ENCODE measurements at regions of chr5 and their contacts with region 1.

Region 1: DNA sequence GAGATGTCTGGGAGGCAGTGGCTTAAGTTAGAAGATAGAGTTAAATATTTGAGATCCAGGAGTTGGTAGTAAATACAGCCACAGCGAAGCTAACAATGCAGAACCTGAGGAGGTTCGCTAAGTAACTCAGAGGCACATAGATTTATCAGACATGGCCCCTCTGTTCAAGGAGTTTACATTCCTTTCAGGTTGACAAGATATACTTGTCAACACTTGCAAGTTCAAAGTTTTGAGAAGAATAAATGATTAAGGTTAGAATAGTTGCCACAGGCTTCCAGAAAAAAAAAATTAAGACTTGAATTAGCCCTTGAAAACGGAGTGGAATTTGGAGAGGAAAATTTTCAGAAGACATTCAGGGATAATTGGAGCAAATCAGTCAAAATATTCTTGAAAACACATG is 658.3 kb upstream of the WWC1 start:
- DNase-seq: no peak
- H3K4me3 ChIP-seq: no peak overlapping the region
- H3K27ac ChIP-seq: no peak overlapping the region
- H3K27me3 ChIP-seq: no peaks in the 10 kb centered on the region
- CTCF ChIP-seq: no peak

Region 2: DNA sequence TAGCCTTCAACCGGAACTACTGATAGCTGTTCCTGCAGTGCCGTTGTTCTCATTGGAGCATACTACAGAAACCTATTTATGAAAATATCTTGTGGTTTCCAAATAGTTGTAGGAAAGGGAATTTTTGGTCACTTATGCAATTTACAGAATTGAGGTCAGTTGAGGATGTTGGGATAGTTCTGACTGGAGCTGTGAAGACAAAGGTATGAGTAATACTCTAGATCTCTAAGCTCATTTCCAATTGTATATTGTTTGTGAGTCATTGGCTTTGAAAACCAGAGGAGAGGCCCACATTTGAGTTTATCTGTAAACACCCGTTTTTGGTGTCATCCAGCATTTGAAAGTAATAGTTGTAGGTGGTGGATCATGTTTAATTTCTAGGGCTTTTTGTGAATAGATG is 97.0 kb after region 1 on chr5:
- CTCF ChIA-PET with region 1: no interaction called
- POLR2A ChIA-PET with region 1: no interaction called
- DNase-seq: peak; percentile 80
- H3K4me3 ChIP-seq: no peak overlapping the region
- H3K27ac ChIP-seq: no peak overlapping the region
- H3K27me3 ChIP-seq: no peaks in the 10 kb centered on the region
- CTCF ChIP-seq: no peak

Region 3: DNA sequence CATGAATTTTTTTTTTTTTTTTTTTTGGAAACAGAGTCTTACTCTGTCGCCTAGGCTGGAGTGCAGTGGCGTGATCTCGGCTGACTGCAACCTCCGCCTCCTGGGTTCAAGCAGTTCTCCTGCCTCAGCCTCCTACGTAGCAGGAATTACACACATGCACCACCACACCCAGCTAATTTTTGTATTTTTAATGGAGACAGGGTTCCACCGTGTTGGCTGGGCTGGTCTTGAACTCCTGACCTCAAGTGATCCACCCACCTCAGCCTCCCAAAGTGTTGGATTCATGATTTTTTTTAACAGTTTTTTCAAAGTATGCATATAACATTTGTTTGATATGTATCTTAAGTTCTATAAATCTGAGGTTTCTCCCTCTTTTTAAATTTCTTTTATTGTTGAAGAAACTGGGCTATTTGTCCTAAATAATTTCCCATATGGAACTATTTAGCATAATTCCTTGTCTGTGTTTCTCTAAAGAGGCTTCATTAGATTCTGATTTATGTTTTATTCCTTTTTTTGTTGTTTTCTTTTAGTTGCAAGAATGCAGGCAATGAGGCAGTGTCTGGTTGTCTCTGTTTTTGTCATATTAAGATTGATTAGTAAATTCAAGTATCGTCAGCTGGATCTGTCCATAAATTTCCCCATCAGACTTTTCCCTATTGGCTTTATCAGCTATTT is 869.6 kb after region 1 on chr5:
- CTCF ChIA-PET with region 1: interaction called, 14 read pairs
- POLR2A ChIA-PET with region 1: no interaction called
- DNase-seq: no peak
- H3K4me3 ChIP-seq: no peak overlapping the region
- H3K27ac ChIP-seq: no peak overlapping the region
- H3K27me3 ChIP-seq: no peaks in the 10 kb centered on the region
- CTCF ChIP-seq: no peak